CD4-positive, alpha-beta T cell (primary cell): ENCODE measurements at regions of chr22 and their contacts with region 1.

Region 1: DNA sequence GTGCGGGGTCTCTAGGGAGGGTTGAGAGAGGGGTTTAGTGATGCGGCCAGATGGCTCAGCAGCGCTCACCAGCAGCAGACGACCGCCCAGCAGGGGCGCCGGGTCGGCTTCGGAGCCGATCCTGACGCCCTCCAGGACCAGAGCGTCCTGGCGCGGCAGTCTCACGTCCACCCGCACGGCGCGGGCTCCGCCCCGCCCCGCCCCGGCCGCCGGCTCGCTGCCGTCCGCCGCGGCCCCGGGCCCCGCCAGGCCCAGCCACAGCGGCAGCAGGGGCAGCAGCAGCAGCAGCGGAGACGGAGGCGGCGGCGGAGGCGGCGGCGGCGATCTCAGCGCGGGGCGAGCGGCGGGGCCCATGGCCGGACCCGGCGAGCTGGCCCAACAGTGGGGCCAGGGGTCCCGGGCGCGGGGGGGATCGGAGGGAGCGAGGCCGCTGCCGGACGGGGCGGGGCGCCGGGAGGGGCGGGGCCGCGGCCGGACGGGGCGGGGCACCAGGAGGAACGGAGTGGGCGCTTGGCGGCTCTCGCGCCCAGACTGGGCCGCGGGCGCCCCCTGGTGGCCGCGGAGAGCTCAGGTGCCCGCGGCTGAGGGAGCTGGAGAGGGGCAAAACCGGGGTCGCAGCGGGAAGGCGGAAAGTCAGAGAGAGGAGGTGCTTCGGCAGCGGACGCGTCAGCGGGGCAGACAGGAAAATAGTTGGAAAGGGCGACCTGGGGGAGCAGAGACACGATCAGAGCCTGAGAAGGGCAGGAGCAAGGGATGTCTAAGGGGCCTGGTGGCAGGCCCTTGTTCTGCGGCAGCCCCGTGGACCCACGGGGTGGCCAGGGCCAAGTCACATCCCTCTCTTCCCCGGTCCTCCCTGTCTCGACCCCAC is at the start of gene RNF215:
- DNase-seq: peak; percentile 44 to 91 (median 74)
- ATAC-seq: peak; percentile 82
- H3K4me3 ChIP-seq: peak within 1 kb of the TSS; percentile 45
- H3K4me3 Mint-ChIP-seq: peak within 1 kb of the TSS; percentile 87
- H3K27ac ChIP-seq: no peak within 1 kb of the TSS
- H3K27ac Mint-ChIP-seq: no peak within 1 kb of the TSS
- H3K4me1 ChIP-seq: peaks cover 19% of the 10 kb centered on the region
- H3K4me1 Mint-ChIP-seq: peaks cover 26% of the 10 kb centered on the region
- H3K27me3 ChIP-seq: no peaks in the 10 kb centered on the region
- H3K27me3 Mint-ChIP-seq: no peaks in the 10 kb centered on the region
- CTCF ChIP-seq: peak; percentile 69
- total RNA-seq, gene RNF215: 4.6 to 4.9 TPM

Region 2: DNA sequence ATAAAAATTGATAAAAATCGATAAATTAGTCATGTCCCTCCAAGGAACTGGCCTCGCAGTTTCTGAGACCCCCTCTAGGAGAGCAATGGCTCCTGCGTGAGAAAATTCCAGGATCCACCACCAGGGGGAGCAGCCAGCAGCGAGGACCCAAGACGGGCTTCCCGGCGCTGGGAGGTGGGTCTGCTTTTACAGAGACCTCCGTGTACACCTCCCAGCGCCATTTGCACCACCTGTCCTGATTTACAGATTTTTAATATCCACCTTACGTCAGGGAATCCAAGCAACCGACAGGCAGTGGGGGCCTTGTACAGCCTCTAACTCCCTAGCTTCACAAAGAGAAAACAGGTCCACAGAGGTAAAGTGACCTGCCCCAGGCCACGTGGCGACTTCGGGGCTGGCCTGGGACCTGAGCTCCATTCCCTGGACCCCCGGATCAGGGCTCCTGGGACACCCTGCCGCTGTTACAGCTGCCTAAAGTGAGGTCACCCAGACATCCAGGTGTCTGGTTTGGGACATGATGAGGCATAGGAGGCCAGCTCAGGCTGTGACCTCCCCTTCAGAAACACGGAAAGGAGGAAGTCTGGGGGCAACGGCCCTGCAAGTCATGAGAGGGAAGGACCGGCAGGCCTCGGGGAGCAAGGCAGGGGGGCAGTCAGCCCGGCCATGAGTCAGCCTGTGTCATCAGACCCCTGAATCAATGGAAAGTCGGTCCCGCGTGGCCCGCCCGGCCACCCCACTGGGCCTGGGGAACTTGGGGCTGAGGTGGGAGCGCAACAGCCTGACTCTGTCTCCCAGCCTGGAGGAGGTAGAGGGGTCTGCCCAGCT is 124.1 kb before region 1 on chr22:
- CTCF ChIA-PET with region 1: interaction called, 4 read pairs
- POLR2A ChIA-PET with region 1: no interaction called
- intact Hi-C with region 1: loop called in 1 of 2 experiments (anchors 1 kb)
- DNase-seq: peak; percentile 68 to 89 (median 76)
- ATAC-seq: no peak
- H3K4me3 ChIP-seq: peak overlapping the region; percentile 21
- H3K4me3 Mint-ChIP-seq: peak overlapping the region; percentile 81
- H3K27ac ChIP-seq: peak overlapping the region in 1 of 2 donors; percentile 14
- H3K27ac Mint-ChIP-seq: peak overlapping the region; percentile 81
- H3K4me1 ChIP-seq: peaks cover 60% of the 10 kb centered on the region
- H3K4me1 Mint-ChIP-seq: peaks cover 49% of the 10 kb centered on the region
- H3K27me3 ChIP-seq: no peaks in the 10 kb centered on the region
- H3K27me3 Mint-ChIP-seq: no peaks in the 10 kb centered on the region
- CTCF ChIP-seq: peak; percentile 100

Region 3: GRCh38 chr22:30326706-30327362 is 60.4 kb before region 1 on chr22 and contains the start of gene TBC1D10A:
- CTCF ChIA-PET with region 1: interaction called, 6 read pairs
- POLR2A ChIA-PET with region 1: interaction called, 6 read pairs
- intact Hi-C with region 1: loop called in 1 of 2 experiments (anchors 2 kb)
- DNase-seq: peak; percentile 84 to 98 (median 94)
- ATAC-seq: peak; percentile 89
- H3K4me3 ChIP-seq: peak within 1 kb of the TSS; percentile 71
- H3K4me3 Mint-ChIP-seq: peak within 1 kb of the TSS; percentile 93
- H3K27ac ChIP-seq: peak within 1 kb of the TSS; percentile 63 to 74
- H3K27ac Mint-ChIP-seq: peak within 1 kb of the TSS; percentile 97
- H3K4me1 ChIP-seq: peaks cover 54% of the 10 kb centered on the region
- H3K4me1 Mint-ChIP-seq: peaks cover 51% of the 10 kb centered on the region
- H3K27me3 ChIP-seq: no peaks in the 10 kb centered on the region
- H3K27me3 Mint-ChIP-seq: no peaks in the 10 kb centered on the region
- CTCF ChIP-seq: no peak
- total RNA-seq, gene TBC1D10A: 38.9 to 41.8 TPM

Region 4: DNA sequence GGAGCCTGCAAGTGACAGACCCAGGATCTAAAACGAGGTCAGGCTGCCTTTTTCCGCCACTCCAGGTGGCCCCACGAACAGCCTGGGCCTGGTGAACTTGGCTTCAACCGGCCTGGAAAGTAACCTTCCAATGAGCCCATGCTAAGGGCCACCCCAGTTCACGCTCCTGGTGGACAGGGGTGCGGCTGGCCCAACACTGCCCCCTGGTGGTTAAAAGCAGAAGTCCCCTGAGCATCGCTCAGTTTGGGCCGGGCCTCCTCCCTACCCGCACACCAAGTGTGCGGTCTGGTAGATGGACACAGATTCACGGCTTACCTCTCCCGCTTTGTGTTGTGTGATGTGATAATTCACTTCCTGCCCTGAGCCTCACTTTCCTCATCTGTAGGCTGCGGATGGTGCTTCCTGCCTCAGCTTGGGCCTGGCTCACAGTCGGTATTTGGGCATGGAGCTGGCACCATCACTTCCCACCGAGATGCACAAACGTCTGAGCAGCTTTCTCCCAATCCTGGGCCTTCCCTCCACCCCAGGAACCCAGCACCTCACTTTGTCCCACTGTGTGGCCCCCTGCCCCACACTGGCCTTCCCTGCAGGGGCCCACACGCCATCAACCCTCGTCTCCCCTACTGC is 98.3 kb after region 1 on chr22:
- CTCF ChIA-PET with region 1: interaction called, 24 read pairs
- POLR2A ChIA-PET with region 1: no interaction called
- intact Hi-C with region 1: loop called (anchors 1 kb)
- DNase-seq: peak; percentile 58 to 88 (median 74)
- ATAC-seq: peak; percentile 98
- H3K4me3 ChIP-seq: no peak overlapping the region
- H3K4me3 Mint-ChIP-seq: no peak overlapping the region
- H3K27ac ChIP-seq: no peak overlapping the region
- H3K27ac Mint-ChIP-seq: no peak overlapping the region
- H3K4me1 ChIP-seq: peaks cover 6% of the 10 kb centered on the region
- H3K4me1 Mint-ChIP-seq: no peaks in the 10 kb centered on the region
- H3K27me3 ChIP-seq: peaks cover 0 to 2% of the 10 kb centered on the region in 2 experiments
- H3K27me3 Mint-ChIP-seq: peaks cover 5% of the 10 kb centered on the region
- CTCF ChIP-seq: peak; percentile 98

Region 5: DNA sequence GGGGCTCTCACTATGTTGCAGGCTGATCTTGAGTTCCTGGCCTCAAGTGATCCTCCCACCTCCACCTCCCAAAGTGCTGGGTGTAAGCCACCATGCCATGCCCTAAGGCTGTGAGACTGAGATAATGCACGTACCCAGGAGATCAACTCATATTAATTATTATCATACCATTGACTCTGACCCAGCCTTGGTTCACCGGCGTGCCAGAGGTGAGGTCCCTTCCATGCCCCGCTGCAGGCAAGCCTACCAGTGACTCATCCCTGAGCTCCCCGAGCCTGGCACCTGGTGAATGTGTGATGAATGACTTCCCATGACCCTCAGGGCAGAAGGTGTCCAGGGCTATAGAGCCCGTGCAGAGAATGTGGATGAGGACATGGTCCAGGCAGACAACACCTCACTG is 175.2 kb after region 1 on chr22:
- CTCF ChIA-PET with region 1: no interaction called
- POLR2A ChIA-PET with region 1: no interaction called
- intact Hi-C with region 1: no loop called
- DNase-seq: no peak
- ATAC-seq: no peak
- H3K4me3 ChIP-seq: no peak overlapping the region
- H3K4me3 Mint-ChIP-seq: no peak overlapping the region
- H3K27ac ChIP-seq: no peak overlapping the region
- H3K27ac Mint-ChIP-seq: no peak overlapping the region
- H3K4me1 ChIP-seq: no peaks in the 10 kb centered on the region
- H3K4me1 Mint-ChIP-seq: no peaks in the 10 kb centered on the region
- H3K27me3 ChIP-seq: peaks cover 0 to 2% of the 10 kb centered on the region in 2 experiments
- H3K27me3 Mint-ChIP-seq: peaks cover 6% of the 10 kb centered on the region
- CTCF ChIP-seq: no peak

Region 6: GRCh38 chr22:30754971-30755756 is 368.0 kb after region 1 on chr22:
- CTCF ChIA-PET with region 1: no interaction called
- POLR2A ChIA-PET with region 1: no interaction called
- intact Hi-C with region 1: loop called in 1 of 2 experiments (anchors 10 kb)
- DNase-seq: peak; percentile 5 to 70 (median 32)
- ATAC-seq: peak; percentile 74
- H3K4me3 ChIP-seq: no peak overlapping the region
- H3K4me3 Mint-ChIP-seq: no peak overlapping the region
- H3K27ac ChIP-seq: no peak overlapping the region
- H3K27ac Mint-ChIP-seq: no peak overlapping the region
- H3K4me1 ChIP-seq: no peaks in the 10 kb centered on the region
- H3K4me1 Mint-ChIP-seq: no peaks in the 10 kb centered on the region
- H3K27me3 ChIP-seq: no peaks in the 10 kb centered on the region
- H3K27me3 Mint-ChIP-seq: no peaks in the 10 kb centered on the region
- CTCF ChIP-seq: no peak